ENCODE measurements at regions of chr11 and their contacts with region 1.

Region 1: DNA sequence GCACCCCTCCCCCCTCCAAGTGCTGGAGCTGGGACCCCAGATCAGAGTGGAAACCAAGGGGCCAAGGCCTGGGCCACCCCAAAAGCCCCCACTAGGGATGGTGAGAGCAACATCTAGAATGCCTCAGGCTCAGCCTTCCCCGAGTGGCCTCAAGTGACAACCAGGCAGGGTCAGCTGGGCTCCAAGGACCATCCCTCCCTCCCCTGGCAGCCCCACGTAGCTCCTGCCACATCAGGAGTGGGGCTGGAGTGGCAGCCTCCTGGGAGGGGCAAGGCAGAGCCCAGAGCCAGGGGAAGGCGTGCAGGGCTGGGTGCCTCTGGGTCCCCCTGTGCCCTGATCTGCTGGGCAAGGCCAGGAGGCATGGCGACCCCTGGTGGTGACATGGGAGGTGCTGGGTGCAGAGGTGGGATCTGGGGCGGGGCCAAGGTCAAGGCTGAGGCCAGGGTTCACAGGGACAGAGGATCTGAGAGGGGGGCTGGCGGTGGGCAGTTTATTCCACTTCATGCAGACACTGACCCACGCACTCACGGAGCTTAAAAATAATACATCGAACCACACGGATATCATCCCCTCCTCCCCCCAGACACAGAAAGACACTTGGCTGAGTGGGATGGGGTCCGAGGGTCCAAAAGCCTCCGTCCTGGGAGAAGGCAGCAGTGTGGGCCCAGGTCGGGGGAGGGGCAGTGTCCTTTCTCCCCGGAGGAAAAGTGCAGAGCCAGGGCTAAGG is 15.8 kb upstream of the EHD1 start:
- DNase-seq: peak; percentile 50 to 98
- H3K4me3 ChIP-seq: no peak overlapping the region
- H3K27ac ChIP-seq: no peak overlapping the region
- H3K4me1 ChIP-seq: peaks cover 0 to 3% (median under 1%) of the 10 kb centered on the region in 4 experiments; a peak in 2 of 7 replicates
- H3K27me3 ChIP-seq: no peaks in the 10 kb centered on the region
- CTCF ChIP-seq: peak in 2 of 3 experiments; percentile 95 to 96; a peak in 3 of 4 replicates
- EP300 ChIP-seq: no peak
- POLR2A ChIP-seq: no peak
- RAD21 ChIP-seq: peak; percentile 71 to 81

Region 2: GRCh38 chr11:64878494-64879243 is 15.6 kb before region 1 on chr11 and contains the start of gene EHD1:
- CTCF ChIA-PET with region 1: interaction called, 118 read pairs
- POLR2A ChIA-PET with region 1: interaction called, 65 read pairs
- DNase-seq: peak; percentile 94 to 99
- H3K4me3 ChIP-seq: peak within 1 kb of the TSS; percentile 60 to 97 (median 94)
- H3K27ac ChIP-seq: peak within 1 kb of the TSS; percentile 71
- H3K4me1 ChIP-seq: peaks cover 0 to 22% (median 11%) of the 10 kb centered on the region in 4 experiments; a peak in 6 of 7 replicates
- H3K27me3 ChIP-seq: peaks cover 0 to 6% (median 2%) of the 10 kb centered on the region in 4 experiments; a peak in 3 of 7 replicates
- CTCF ChIP-seq: peak; percentile 66 to 76 (median 71)
- EP300 ChIP-seq: no peak
- POLR2A ChIP-seq: peak in 1 of 2 experiments; percentile 92; a peak in 2 of 3 replicates
- RAD21 ChIP-seq: 0 out of 4 replicates have a peak, but pooled peaks of 1 of the 2 experiments have one; percentile 24
- total RNA-seq, gene EHD1: 36.9 and 42.9 TPM in 2 replicates

Region 3: GRCh38 chr11:64905516-64906313 is 11.5 kb after region 1 on chr11:
- CTCF ChIA-PET with region 1: interaction called, 11 read pairs
- POLR2A ChIA-PET with region 1: interaction called, 5 read pairs
- DNase-seq: no peak
- H3K4me3 ChIP-seq: no peak overlapping the region
- H3K27ac ChIP-seq: no peak overlapping the region
- H3K4me1 ChIP-seq: no peaks in the 10 kb centered on the region
- H3K27me3 ChIP-seq: no peaks in the 10 kb centered on the region
- CTCF ChIP-seq: no peak
- EP300 ChIP-seq: no peak
- POLR2A ChIP-seq: no peak
- RAD21 ChIP-seq: no peak